GM23248 (cell line): ENCODE measurements at regions of chr11 and their contacts with region 1.

Region 1: GRCh38 chr11:2420502-2421225 is 20.1 kb downstream of the TSSC4 start:
- DNase-seq: peak; percentile 85
- H3K4me3 ChIP-seq: no peak overlapping the region
- H3K27ac ChIP-seq: no peak overlapping the region
- H3K4me1 ChIP-seq: no peaks in the 10 kb centered on the region
- H3K27me3 ChIP-seq: no peaks in the 10 kb centered on the region; the same call in 1 of the 2 replicates

Region 2: GRCh38 chr11:1640076-1640946 is 780.4 kb before region 1 on chr11:
- in situ Hi-C with region 1: no loop called
- DNase-seq: peak; percentile 60
- H3K4me3 ChIP-seq: no peak overlapping the region
- H3K27ac ChIP-seq: no peak overlapping the region
- H3K4me1 ChIP-seq: no peaks in the 10 kb centered on the region
- H3K27me3 ChIP-seq: peaks cover 33% of the 10 kb centered on the region

Region 3: DNA sequence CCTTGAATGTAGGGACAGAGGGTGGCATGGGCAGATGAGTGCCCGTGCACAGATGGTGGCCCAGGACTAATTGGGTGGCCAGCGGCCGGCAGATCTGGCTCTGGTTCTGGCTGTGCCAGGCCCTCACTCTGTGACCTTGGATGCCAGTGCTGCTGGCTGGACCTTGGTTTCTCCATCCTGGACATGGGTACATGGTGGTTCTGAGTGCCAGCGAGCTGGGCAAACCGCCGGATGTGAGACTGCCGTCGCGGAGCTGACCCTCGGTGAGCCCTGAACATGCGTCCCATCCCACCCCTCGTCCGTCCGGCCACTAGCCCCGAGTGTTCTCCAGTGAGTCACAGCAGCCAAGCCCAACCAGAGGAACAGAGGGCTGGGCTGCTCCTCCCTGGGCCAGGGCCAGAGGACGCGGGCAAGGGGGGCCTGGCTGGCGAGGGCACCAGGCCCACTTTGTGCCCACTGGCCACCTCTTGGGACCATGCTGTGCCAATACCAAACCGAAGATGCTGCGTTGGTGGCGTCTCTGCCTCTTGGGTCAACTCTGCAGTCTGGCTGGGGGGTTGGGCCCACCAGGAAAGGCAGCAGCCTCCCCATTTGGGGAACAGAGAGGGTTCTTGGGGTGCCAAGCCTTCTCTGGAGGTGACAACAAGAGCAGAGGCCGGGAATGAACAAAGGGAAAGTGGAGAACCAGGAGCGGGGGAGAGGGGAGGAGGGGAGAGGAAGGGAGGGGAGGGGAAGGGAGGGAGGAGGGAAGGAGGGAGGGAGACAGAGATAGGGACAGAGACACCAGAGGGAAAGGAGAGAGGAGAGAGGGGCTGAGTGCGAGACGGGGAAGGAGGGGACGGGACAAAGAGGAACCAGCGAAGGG is 557.1 kb before region 1 on chr11:
- in situ Hi-C with region 1: no loop called
- DNase-seq: peak; percentile 89
- H3K4me3 ChIP-seq: no peak overlapping the region
- H3K27ac ChIP-seq: peak overlapping the region; percentile 23; the same call in 1 of the 2 replicates
- H3K4me1 ChIP-seq: peaks cover 15% of the 10 kb centered on the region
- H3K27me3 ChIP-seq: peaks cover 9% of the 10 kb centered on the region; the same call in 1 of the 2 replicates

Region 4: DNA sequence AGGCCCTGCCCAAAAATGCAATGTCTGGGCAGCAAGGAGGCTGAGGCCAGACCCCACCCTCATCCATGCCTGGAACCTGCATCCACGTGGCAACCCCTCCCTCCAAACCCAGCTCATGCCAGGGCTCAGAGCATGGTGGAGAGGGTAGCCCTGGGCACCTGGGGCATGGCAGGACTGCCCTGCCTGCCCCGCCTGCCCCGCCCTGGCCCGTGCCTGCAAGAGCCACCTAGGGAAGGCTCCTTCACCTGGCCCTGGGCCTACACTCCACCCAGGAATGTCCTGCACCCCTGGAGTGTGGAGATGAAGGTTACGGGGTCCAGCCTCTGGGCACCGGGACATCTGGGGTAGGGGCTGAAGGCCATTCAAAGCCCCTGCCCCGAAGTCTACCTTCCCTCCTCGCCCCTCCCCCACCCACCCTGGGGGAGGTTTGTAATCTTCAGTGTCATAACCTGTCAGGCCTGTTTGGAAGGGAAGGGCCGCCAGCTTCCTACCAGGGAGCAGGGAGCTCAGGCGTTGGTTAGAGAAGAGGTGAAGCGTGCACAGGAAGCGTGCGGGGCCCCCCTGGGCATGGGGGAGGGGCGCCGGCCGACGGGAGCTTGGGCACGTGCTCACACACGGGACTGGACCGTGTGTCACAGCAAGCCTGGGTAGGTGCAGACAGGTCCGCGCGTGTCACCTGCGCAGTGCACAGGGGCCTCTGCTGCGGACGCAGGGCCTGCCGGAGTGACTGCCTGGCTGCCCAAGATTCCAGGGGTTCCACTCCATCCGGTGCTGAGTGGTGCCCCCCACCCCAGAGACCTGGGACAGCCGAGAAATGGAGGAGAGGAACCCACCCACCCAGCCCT is 218.4 kb before region 1 on chr11:
- in situ Hi-C with region 1: loop called (anchors 5 kb)
- DNase-seq: no peak
- H3K4me3 ChIP-seq: no peak overlapping the region
- H3K27ac ChIP-seq: no peak overlapping the region
- H3K4me1 ChIP-seq: no peaks in the 10 kb centered on the region
- H3K27me3 ChIP-seq: no peaks in the 10 kb centered on the region

Region 5: DNA sequence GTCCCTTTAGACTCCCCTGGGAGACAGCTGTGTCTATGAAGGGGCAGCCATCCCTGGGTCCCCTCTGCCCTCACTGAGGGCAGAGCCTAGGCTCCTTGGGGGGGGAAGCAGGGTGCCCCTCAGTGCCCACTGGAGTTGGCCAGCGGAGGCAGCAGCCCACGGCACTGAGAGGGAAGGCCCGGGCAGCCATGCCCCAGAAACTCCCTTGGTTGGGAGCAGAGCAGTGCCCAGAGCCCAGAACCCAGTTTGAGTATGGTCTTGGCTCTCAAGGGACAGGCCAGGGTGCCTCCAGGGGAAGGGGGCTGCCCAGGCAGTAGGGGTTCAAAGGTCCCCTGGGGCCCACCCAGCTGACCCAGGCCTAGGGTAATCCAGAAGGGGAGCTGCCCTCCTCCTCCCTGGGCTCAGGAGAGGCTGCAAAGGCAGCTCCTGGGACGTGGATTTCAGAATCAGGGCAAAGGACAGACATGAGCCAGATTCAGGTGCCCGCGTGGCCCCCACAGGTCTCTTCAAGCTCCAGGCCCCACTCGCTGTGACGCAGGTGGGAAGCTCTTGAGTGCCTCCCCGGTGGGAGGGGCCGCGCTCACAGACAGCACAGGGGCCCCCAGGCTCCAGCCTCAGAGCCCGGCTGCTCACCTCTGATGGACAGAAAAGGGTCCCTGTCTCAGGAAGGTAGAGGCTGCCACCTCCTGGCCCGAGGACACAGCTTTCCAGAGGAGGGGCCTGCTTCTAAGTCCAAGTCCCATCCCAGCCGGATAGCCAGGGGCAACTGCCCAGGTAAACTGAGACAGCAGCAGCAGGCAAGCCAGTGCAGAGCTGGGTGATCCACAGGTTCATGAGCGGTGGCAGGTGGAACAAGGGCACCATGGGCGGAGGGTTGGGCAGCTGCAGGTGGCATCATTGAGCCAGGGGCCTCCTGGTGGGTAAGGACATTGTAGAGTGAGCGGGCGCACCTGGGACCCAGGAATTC is 121.6 kb before region 1 on chr11:
- in situ Hi-C with region 1: loop called (anchors 10 kb)
- DNase-seq: no peak
- H3K4me3 ChIP-seq: no peak overlapping the region
- H3K27ac ChIP-seq: no peak overlapping the region
- H3K4me1 ChIP-seq: no peaks in the 10 kb centered on the region
- H3K27me3 ChIP-seq: peaks cover 6% of the 10 kb centered on the region; the same call in 1 of the 2 replicates